ENCODE measurements at regions of chr9 and their contacts with region 1.

Region 1: DNA sequence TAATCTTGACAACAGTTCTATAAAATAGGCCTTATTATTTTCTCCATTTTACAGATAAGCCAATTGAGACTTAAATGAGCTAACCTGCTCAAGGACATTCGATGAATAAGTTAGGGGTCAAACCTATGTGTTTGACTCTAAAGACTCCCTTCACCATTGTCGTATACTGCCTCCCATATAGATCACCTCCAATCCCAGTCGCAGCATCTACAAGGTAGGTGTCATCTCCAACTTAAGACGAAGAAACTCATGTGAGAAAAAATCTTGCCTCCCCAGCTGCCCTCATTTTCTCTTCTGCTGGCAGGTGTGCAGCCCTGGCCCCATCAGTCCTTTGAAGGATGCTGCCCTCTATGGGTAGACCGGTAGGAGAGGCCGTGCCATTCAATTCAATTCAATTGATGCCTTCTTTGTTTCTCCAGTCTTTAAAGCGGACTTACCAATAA is 75.2 kb upstream of the SMARCA2 start:
- DNase-seq: no peak
- H3K4me3 ChIP-seq: no peak overlapping the region
- H3K27ac ChIP-seq: no peak overlapping the region
- H3K4me1 ChIP-seq: no peaks in the 10 kb centered on the region
- H3K27me3 ChIP-seq: no peaks in the 10 kb centered on the region
- CTCF ChIP-seq: peak in 2 of 3 experiments; percentile 19 to 43

Region 2: GRCh38 chr9:1668441-1668840 is 271.5 kb before region 1 on chr9:
- intact Hi-C with region 1: no loop called
- DNase-seq: no peak
- H3K4me3 ChIP-seq: no peak overlapping the region
- H3K27ac ChIP-seq: no peak overlapping the region
- H3K4me1 ChIP-seq: no peaks in the 10 kb centered on the region
- H3K27me3 ChIP-seq: no peaks in the 10 kb centered on the region
- CTCF ChIP-seq: no peak

Region 3: DNA sequence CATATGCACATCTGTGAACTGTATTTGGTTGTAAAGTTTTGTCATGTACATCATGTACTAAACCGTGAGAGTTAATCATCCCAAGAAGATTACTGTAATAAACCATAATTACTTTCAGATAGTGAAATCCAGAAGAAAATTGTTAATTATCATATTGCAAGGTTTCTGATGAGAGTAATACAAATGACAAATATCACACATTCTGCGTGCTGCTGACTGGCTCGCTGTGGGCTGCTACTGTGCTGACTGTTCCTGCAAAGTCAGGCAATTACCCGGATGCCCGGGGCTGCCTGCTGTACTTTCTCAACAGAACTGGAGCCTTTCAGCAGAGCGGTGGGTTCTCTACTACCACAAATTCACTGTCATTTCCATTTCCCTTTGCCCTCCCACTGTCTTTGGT is 143.5 kb after region 1 on chr9:
- intact Hi-C with region 1: loop called (anchors 5 kb)
- DNase-seq: no peak
- H3K4me3 ChIP-seq: no peak overlapping the region
- H3K27ac ChIP-seq: no peak overlapping the region
- H3K4me1 ChIP-seq: peaks cover 8 to 9% of the 10 kb centered on the region in 2 donors
- H3K27me3 ChIP-seq: no peaks in the 10 kb centered on the region
- CTCF ChIP-seq: no peak